ENCODE measurements at regions of chrX and their contacts with region 1.

Region 1: DNA sequence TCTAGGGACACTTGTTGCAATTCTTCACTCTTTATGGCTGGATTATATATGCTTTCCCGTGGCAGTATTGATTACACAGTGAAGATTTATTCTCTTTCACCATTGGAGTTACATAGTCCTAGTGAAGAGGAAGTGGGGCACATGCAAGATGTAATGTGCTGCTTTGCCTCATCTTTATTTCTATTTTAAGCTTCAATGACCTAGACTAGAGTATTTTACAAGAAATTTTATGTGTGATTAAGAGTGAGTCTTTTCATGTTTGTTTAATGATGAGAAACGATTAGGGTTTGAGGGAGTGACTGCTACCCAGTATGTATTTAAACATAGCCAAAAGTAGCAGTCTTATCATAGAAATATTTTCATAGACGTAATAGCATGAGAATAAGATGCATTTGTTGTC is 30.8 kb downstream of the DIAPH2 start:
- DNase-seq: no peak
- H3K4me3 Mint-ChIP-seq: no peak overlapping the region
- H3K27ac Mint-ChIP-seq: no peak overlapping the region
- H3K4me1 Mint-ChIP-seq: peaks cover 18% of the 10 kb centered on the region
- H3K27me3 Mint-ChIP-seq: no peaks in the 10 kb centered on the region
- CTCF ChIP-seq: no peak

Region 2: DNA sequence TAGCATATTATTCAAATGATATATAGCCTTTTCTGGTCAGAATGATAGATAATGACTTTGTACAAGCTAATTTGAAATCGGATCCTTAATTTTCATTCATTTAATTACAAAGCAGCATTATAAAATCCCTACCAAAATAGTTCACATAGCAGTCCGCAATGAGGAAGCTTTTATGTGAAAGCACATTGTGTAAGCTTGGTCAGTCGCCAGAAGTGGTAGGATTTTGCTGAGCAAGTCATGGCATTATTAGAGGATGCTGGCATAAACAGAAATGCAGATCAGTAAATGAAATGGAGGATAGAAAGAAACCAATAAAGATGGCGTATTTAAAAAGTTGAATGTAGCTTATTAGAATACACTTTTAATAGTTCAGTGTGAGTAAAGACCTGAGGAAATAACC is 124.1 kb before region 1 on chrX:
- CTCF ChIA-PET with region 1: no interaction called
- intact Hi-C with region 1: no loop called
- DNase-seq: no peak
- H3K4me3 Mint-ChIP-seq: no peak overlapping the region
- H3K27ac Mint-ChIP-seq: no peak overlapping the region
- H3K4me1 Mint-ChIP-seq: no peaks in the 10 kb centered on the region
- H3K27me3 Mint-ChIP-seq: no peaks in the 10 kb centered on the region
- CTCF ChIP-seq: no peak

Region 3: GRCh38 chrX:96752781-96753180 is 37.3 kb after region 1 on chrX:
- CTCF ChIA-PET with region 1: no interaction called
- intact Hi-C with region 1: loop called (anchors 5 kb)
- DNase-seq: peak; percentile 23
- H3K4me3 Mint-ChIP-seq: peak overlapping the region; percentile 6
- H3K27ac Mint-ChIP-seq: peak overlapping the region; percentile 91
- H3K4me1 Mint-ChIP-seq: peaks cover 21% of the 10 kb centered on the region
- H3K27me3 Mint-ChIP-seq: no peaks in the 10 kb centered on the region
- CTCF ChIP-seq: no peak

Measured in Calu3 (cell line).